Pancreas (tissue), 10 donors: ENCODE measurements at regions of chr1 and their contacts with region 1.

Region 1: DNA sequence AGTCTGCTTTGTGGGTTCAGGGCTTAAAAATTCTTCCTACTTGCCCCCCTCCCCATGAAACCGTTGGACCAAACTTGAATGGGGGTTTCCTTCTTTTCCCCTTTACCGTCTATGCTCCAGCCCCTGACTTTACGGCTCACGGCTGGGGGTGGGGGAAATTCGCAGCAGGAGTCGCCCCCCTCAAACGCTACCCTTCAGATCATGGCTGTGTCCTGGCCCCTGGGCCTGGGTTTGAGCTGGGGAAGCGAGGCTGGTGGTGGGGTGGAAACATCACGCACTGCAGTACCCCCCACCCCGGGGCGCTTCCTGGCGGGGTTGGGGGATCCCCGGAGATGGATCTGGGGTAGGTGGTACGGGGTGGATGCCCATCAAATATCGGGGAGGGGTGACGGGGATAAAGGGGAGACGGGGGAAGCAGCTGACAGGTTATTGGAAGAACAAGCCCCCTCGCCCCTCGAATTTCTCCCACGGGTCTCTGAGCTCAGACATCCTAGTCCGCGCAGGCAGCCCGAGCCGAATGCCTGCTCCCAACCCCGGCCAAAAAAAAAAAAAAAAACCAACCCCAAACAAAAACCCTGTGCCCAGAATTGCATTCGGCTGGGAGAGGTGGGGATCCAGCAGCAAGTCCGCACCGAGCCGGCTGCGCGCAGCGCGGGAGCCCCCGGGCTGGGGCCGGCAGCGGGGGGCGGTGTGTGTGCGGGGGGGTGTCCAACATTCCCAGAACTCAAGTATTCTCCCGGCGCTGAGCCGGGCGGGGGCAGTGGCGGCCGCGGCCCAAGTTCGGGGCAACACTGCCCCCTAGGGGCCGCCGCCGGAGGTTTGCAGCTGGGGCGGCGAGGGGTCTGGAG is 59.0 kb upstream of the ACOT11 start:
- DNase-seq: peak; percentile 70 to 95 (median 82)
- ATAC-seq: peak; percentile 69 to 86 (median 78)
- H3K4me3 ChIP-seq: peak overlapping the region; percentile 38 to 56 (median 51)
- H3K27ac ChIP-seq: peak overlapping the region; percentile 84 to 91 (median 88)
- H3K4me1 ChIP-seq: peaks cover 0 to 9% (median 8%) of the 10 kb centered on the region in 3 donors
- H3K27me3 ChIP-seq: no peaks in the 10 kb centered on the region
- CTCF ChIP-seq: peak; percentile 96 to 98 (median 98)

Region 2: DNA sequence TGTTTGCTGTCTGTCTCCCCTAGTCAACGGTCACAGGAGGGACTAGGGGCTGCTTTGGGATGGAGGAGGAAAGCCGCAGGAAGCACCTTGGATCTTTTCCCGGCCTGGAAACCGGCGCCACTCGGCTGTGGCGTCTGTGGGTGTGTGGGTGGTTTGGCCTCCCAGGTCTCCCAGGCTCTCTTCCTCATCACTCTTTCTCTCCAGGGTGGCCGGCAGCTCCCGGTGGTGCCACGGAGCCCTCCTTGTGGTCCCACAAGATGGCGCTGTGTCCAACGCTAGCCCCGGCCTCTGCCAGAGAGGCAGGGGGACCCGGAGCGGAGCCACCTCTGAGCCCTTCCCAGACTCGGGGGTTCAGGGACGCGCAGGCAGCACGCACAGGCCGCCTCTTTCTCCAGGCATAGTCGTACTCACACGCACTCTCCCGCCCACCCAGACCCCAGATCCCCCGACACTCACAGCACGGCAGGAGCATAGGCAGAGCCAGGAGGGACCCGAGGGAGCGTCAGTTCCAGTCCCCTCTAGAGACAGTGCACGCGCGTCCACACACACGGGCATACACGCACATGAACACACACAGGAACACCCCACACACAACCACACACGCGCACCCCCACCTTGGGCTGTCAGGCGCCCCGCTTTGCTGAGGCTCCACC is 367.4 kb before region 1 on chr1:
- intact Hi-C with region 1: loop called (anchors 5 to 10 kb)
- DNase-seq: peak; percentile 76 to 94 (median 85)
- ATAC-seq: peak; percentile 55 to 88 (median 78)
- H3K4me3 ChIP-seq: peak overlapping the region in 2 of 4 donors; percentile 10 to 33
- H3K27ac ChIP-seq: peak overlapping the region in 2 of 4 donors; percentile 39 to 44
- H3K4me1 ChIP-seq: peaks cover 4 to 33% (median 11%) of the 10 kb centered on the region in 3 donors
- H3K27me3 ChIP-seq: no peaks in the 10 kb centered on the region
- CTCF ChIP-seq: peak; percentile 62 to 83 (median 67)

Region 3: GRCh38 chr1:54406339-54407153 is 82.5 kb before region 1 on chr1 and contains the start of gene SSBP3:
- intact Hi-C with region 1: loop called in 2 of 3 experiments (anchors 5 kb)
- DNase-seq: peak; percentile 90 to 98 (median 94)
- ATAC-seq: peak; percentile 86 to 93 (median 90)
- H3K4me3 ChIP-seq: peak within 1 kb of the TSS; percentile 67 to 82 (median 76)
- H3K27ac ChIP-seq: peak within 1 kb of the TSS; percentile 67 to 90 (median 80)
- H3K4me1 ChIP-seq: peaks cover 4 to 27% (median 14%) of the 10 kb centered on the region in 3 donors
- H3K27me3 ChIP-seq: no peaks in the 10 kb centered on the region
- CTCF ChIP-seq: no peak
- total RNA-seq, gene SSBP3: 20.5 to 25.2 (median 22.9) TPM

Region 4: GRCh38 chr1:54413295-54413694 is 75.7 kb before region 1 on chr1:
- intact Hi-C with region 1: loop called in 2 of 3 experiments (anchors 5 kb)
- DNase-seq: peak in 2 of 6 donors; percentile 27 to 59
- ATAC-seq: peak in 3 of 4 donors; percentile 48 to 58 (median 58)
- H3K4me3 ChIP-seq: no peak overlapping the region
- H3K27ac ChIP-seq: peak overlapping the region in 1 of 4 donors; percentile 4
- H3K4me1 ChIP-seq: peaks cover 0 to 1% (median 0%) of the 10 kb centered on the region in 3 donors
- H3K27me3 ChIP-seq: no peaks in the 10 kb centered on the region
- CTCF ChIP-seq: no peak

Region 5: GRCh38 chr1:54439550-54440223 is 49.3 kb before region 1 on chr1:
- intact Hi-C with region 1: no loop called
- DNase-seq: peak in 1 of 6 donors; percentile 10
- ATAC-seq: no peak
- H3K4me3 ChIP-seq: no peak overlapping the region
- H3K27ac ChIP-seq: no peak overlapping the region
- H3K4me1 ChIP-seq: no peaks in the 10 kb centered on the region
- H3K27me3 ChIP-seq: no peaks in the 10 kb centered on the region
- CTCF ChIP-seq: no peak